Caco-2 (cell line): ENCODE measurements at regions of chr1 and their contacts with region 1.

Region 1: GRCh38 chr1:153566440-153567379 is 1.1 kb upstream of the S100A2 start:
- DNase-seq: peak; percentile 95 to 98
- H3K4me3 ChIP-seq: no peak overlapping the region
- H3K4me3 Mint-ChIP-seq: peak overlapping the region; percentile 8
- H3K27ac Mint-ChIP-seq: peak overlapping the region; percentile 98
- H3K4me1 ChIP-seq: peaks cover 60% of the 10 kb centered on the region
- H3K4me1 Mint-ChIP-seq: peaks cover 60% of the 10 kb centered on the region
- H3K27me3 ChIP-seq: no peaks in the 10 kb centered on the region
- H3K27me3 Mint-ChIP-seq: no peaks in the 10 kb centered on the region
- CTCF ChIP-seq: no peak

Region 2: DNA sequence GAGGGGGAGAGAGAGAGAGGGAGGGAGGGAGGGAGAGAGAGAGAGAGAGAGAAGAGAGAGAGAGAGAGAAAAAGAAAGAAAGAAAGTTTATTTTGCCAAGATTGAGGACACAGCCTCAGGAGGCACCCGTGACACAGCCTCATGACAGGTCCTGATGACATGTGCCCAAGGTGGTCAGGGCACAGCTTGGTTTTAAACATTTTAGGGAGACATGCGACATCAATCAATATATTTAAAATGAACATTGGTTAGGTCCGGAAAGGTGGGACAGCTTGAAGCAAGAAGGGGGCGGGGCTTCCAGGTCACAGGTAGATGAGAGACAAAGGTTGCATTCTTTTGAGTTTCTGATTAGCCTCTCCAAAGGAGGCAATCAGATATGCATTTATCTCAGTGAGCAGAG is 46.5 kb before region 1 on chr1:
- CTCF ChIA-PET with region 1: interaction called, 9 read pairs
- POLR2A ChIA-PET with region 1: interaction called, 12 read pairs
- intact Hi-C with region 1: no loop called
- DNase-seq: peak; percentile 83 to 92
- H3K4me3 ChIP-seq: no peak overlapping the region
- H3K4me3 Mint-ChIP-seq: peak overlapping the region; percentile 8
- H3K27ac Mint-ChIP-seq: peak overlapping the region; percentile 86
- H3K4me1 ChIP-seq: peaks cover 66% of the 10 kb centered on the region
- H3K4me1 Mint-ChIP-seq: peaks cover 49% of the 10 kb centered on the region
- H3K27me3 ChIP-seq: no peaks in the 10 kb centered on the region
- H3K27me3 Mint-ChIP-seq: no peaks in the 10 kb centered on the region
- CTCF ChIP-seq: no peak

Region 3: GRCh38 chr1:153545067-153546055 is 21.3 kb before region 1 on chr1 and contains the start of gene S100A4:
- CTCF ChIA-PET with region 1: interaction called, 13 read pairs
- POLR2A ChIA-PET with region 1: interaction called, 14 read pairs
- intact Hi-C with region 1: loop called (anchors 1 kb)
- DNase-seq: peak; percentile 95 to 97
- H3K4me3 ChIP-seq: no peak within 1 kb of the TSS
- H3K4me3 Mint-ChIP-seq: peak within 1 kb of the TSS; percentile 71
- H3K27ac Mint-ChIP-seq: peak within 1 kb of the TSS; percentile 95
- H3K4me1 ChIP-seq: peaks cover 58% of the 10 kb centered on the region
- H3K4me1 Mint-ChIP-seq: peaks cover 51% of the 10 kb centered on the region
- H3K27me3 ChIP-seq: no peaks in the 10 kb centered on the region
- H3K27me3 Mint-ChIP-seq: no peaks in the 10 kb centered on the region
- CTCF ChIP-seq: no peak
- total RNA-seq, gene S100A4: 53.6 and 54.4 TPM in 2 replicates

Region 4: GRCh38 chr1:153577624-153578051 is 10.9 kb after region 1 on chr1:
- CTCF ChIA-PET with region 1: interaction called, 7 read pairs
- POLR2A ChIA-PET with region 1: interaction called, 3 read pairs
- intact Hi-C with region 1: loop called (anchors 1 kb)
- DNase-seq: peak; percentile 52 to 76
- H3K4me3 ChIP-seq: no peak overlapping the region
- H3K4me3 Mint-ChIP-seq: peak overlapping the region; percentile 16
- H3K27ac Mint-ChIP-seq: peak overlapping the region; percentile 73
- H3K4me1 ChIP-seq: peaks cover 62% of the 10 kb centered on the region
- H3K4me1 Mint-ChIP-seq: peaks cover 45% of the 10 kb centered on the region
- H3K27me3 ChIP-seq: no peaks in the 10 kb centered on the region
- H3K27me3 Mint-ChIP-seq: no peaks in the 10 kb centered on the region
- CTCF ChIP-seq: no peak